WTC11 (cell line): ENCODE measurements at regions of chr9 and their contacts with region 1.

Region 1: DNA sequence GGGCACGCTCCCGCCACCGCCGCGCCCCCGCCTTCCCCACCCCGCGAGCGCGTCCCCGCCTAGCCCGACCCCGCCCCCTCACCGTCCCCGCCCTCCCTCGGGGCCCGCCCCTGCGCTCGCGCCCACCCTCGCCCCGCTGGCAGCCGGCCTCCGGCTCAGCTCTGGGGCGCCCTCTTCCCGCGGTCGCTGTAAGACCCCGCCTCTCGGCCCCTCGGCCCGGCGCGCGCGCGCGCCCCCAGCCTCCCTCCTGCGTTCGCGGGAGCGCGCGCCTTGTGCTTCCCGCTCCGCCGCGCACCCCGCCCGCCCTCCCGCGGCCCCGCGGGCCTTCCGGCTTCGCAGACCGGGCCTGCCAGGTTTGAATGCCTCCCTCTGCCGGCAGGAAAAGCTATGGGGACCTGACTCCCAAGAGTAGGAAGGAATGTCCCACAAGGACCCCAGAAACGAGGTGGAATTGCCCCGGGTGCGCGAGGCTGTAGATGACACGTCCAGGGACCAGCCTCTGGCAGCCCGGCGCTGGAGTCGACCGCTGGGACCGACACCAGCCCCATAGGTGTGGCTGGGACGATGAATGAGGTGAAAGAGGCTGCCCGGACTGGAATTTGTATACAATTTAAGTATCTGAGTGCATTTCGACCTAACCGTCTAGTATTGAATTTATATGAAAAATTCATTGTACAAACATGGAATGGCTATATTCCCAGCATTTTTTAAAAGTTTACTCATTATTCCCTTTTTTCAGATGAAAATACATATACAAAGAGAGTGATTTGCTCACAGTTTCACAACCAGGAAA is 416 bp upstream of the PTBP3 start:
- DNase-seq: peak; percentile 95
- ATAC-seq: peak; percentile 92
- H3K4me3 Mint-ChIP-seq: peak overlapping the region; percentile 92
- H3K27ac Mint-ChIP-seq: peak overlapping the region; percentile 99
- H3K4me1 Mint-ChIP-seq: peaks cover 29% of the 10 kb centered on the region
- H3K27me3 Mint-ChIP-seq: no peaks in the 10 kb centered on the region
- CTCF ChIP-seq: peak; percentile 10; the same call in 1 of the 2 replicates

Region 2: GRCh38 chr9:112203536-112203935 is 130.3 kb before region 1 on chr9:
- CTCF ChIA-PET with region 1: interaction called, 8 read pairs
- POLR2A ChIA-PET with region 1: interaction called, 10 read pairs
- DNase-seq: no peak
- ATAC-seq: no peak
- H3K4me3 Mint-ChIP-seq: no peak overlapping the region
- H3K27ac Mint-ChIP-seq: no peak overlapping the region
- H3K4me1 Mint-ChIP-seq: no peaks in the 10 kb centered on the region
- H3K27me3 Mint-ChIP-seq: no peaks in the 10 kb centered on the region
- CTCF ChIP-seq: no peak

Region 3: DNA sequence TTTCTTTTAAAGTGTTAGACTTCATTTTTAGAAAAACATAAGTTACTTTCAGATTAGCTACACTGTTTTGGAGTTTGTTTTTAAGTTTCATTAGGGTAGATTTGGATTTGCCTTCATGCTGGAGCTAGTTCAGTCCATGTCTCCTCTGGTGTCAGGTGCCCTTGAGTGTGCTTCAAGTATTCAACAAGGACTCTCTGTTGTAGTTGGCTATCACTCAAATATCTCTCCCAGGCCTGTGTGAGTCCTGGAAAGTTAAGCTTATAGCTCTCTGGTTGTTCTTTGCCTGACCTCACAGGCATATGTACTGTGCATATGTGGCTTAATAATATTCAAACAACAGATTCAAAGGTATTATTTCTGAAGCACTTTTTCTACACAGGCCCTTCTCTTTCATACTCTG is 45.8 kb before region 1 on chr9:
- CTCF ChIA-PET with region 1: no interaction called
- POLR2A ChIA-PET with region 1: no interaction called
- DNase-seq: no peak
- ATAC-seq: no peak
- H3K4me3 Mint-ChIP-seq: no peak overlapping the region
- H3K27ac Mint-ChIP-seq: peak overlapping the region; percentile 75; the same call in 1 of the 2 replicates
- H3K4me1 Mint-ChIP-seq: peaks cover 10% of the 10 kb centered on the region
- H3K27me3 Mint-ChIP-seq: no peaks in the 10 kb centered on the region
- CTCF ChIP-seq: no peak

Region 4: GRCh38 chr9:112322701-112323377 is 11.0 kb before region 1 on chr9:
- CTCF ChIA-PET with region 1: interaction called, 11 read pairs
- POLR2A ChIA-PET with region 1: no interaction called
- DNase-seq: no peak
- ATAC-seq: no peak
- H3K4me3 Mint-ChIP-seq: no peak overlapping the region
- H3K27ac Mint-ChIP-seq: peak overlapping the region; percentile 84
- H3K4me1 Mint-ChIP-seq: peaks cover 53% of the 10 kb centered on the region
- H3K27me3 Mint-ChIP-seq: no peaks in the 10 kb centered on the region
- CTCF ChIP-seq: no peak

Region 5: GRCh38 chr9:112379177-112380101 is 45.6 kb after region 1 on chr9:
- CTCF ChIA-PET with region 1: interaction called, 16 read pairs
- POLR2A ChIA-PET with region 1: interaction called, 6 read pairs
- DNase-seq: peak; percentile 100
- ATAC-seq: peak; percentile 97
- H3K4me3 Mint-ChIP-seq: peak overlapping the region; percentile 90
- H3K27ac Mint-ChIP-seq: peak overlapping the region; percentile 99
- H3K4me1 Mint-ChIP-seq: peaks cover 29% of the 10 kb centered on the region
- H3K27me3 Mint-ChIP-seq: no peaks in the 10 kb centered on the region
- CTCF ChIP-seq: no peak